H1 (cell line): ENCODE measurements at regions of chr1 and their contacts with region 1.

Region 1: DNA sequence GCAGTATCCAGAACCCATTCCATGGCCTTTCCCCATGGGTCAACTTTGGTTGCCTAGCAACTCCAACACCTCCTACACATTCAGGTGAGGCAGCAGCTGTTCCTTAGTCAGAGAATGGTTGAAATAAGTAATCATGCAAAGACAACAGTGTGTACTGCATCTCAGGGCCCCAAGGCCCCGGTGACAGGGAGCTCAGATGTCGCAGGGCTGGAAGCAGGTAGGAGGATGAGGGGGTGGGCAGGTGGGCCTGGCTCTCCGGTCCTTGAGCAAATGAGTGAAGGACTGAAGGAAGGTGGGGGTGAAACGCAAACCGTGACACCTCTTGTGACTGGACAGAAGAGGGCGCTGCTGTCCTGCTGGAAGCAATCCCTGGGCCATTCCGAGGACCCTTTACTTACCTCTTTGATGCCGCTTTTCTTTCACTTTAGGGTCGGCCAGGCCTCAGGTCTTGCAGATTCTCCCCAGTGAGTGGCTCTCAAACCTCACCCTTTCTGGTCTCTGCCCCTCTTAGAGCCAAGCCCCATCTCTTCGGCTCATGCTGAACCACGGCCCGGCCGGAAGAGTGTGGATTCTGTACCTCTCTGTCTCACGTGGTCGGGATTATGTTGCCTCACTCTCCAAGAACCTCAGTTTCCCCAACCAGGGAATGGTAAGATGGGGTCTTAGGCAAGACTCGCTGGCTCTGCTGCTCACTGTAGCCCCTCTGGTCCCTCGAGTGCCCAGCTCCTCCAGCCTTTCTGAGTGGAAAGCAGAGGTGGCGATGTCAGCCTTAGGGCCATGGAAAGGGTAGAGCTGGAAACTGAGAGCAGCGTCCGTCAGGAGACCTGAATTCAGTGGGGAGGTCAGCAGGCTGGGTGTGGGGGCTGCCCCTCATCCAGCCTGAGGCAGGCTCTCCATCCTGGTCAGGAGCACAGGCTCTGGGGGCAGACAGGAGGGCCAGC is 5.6 kb upstream of the KCNA10 start:
- DNase-seq: peak; percentile 53 to 81
- H3K4me3 ChIP-seq: no peak overlapping the region
- H3K27ac ChIP-seq: no peak overlapping the region
- H3K4me1 ChIP-seq: peaks cover 0 to 3% (median 0%) of the 10 kb centered on the region in 4 experiments; a peak in 1 of 7 replicates
- H3K27me3 ChIP-seq: peaks cover 0 to 6% (median 0%) of the 10 kb centered on the region in 4 experiments; a peak in 4 of 7 replicates
- CTCF ChIP-seq: peak; percentile 89 to 97 (median 93)
- EP300 ChIP-seq: no peak
- POLR2A ChIP-seq: no peak
- RAD21 ChIP-seq: peak; percentile 95 to 98

Region 2: DNA sequence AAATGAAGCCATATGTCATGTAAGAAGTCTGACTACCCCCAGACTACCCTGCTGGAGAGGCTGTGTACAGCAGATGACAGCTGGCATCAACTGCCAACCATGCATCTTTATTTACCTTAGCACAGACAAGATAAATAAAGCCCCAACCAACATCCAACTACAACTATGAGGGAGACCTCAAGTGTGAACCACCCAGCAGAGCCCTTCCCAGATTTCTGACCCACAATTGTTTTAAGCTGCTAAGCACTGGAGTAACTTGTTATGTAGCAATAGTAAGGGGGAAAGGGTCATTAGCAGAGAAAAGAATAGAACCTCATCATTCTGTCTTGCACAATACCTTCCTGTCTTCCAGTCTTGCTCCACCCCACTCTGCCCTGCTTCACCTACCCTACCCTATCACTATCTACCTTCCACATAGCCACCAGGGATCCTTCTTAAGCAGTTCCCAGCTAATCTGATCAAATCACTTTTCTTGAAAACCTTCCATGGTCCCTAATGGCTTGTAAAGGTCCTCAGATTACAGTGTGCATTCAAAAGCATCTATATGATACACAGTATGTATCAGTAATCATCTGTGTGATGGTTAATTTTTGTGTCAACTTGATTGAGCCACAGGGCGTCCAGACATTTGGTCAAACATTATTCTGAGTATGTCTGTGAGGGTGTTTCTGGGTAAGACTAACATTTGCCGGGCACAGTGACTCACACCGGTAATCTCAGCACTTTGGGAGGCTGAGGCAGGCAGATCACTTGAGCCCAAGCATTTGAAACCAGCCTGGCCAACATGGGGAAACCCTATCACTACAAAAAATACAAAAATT is 205.0 kb before region 1 on chr1:
- CTCF ChIA-PET with region 1: no interaction called
- POLR2A ChIA-PET with region 1: no interaction called
- DNase-seq: no peak
- H3K4me3 ChIP-seq: no peak overlapping the region
- H3K27ac ChIP-seq: no peak overlapping the region
- H3K4me1 ChIP-seq: no peaks in the 10 kb centered on the region
- H3K27me3 ChIP-seq: no peaks in the 10 kb centered on the region
- CTCF ChIP-seq: no peak
- EP300 ChIP-seq: no peak
- POLR2A ChIP-seq: no peak
- RAD21 ChIP-seq: no peak

Region 3: GRCh38 chr1:110508038-110508940 is 16.3 kb before region 1 on chr1:
- CTCF ChIA-PET with region 1: interaction called, 85 read pairs
- POLR2A ChIA-PET with region 1: interaction called, 3 read pairs
- DNase-seq: peak in 1 of 2 experiments; percentile 58
- H3K4me3 ChIP-seq: no peak overlapping the region
- H3K27ac ChIP-seq: no peak overlapping the region
- H3K4me1 ChIP-seq: peaks cover 0 to 7% (median 2%) of the 10 kb centered on the region in 4 experiments; a peak in 3 of 7 replicates
- H3K27me3 ChIP-seq: no peaks in the 10 kb centered on the region; a peak in 1 of 7 replicates
- CTCF ChIP-seq: no peak
- EP300 ChIP-seq: no peak
- POLR2A ChIP-seq: no peak
- RAD21 ChIP-seq: no peak

Region 4: GRCh38 chr1:110554871-110555801 is 30.6 kb after region 1 on chr1:
- CTCF ChIA-PET with region 1: interaction called, 302 read pairs
- POLR2A ChIA-PET with region 1: no interaction called
- DNase-seq: peak in 1 of 2 experiments; percentile 81
- H3K4me3 ChIP-seq: peak overlapping the region; percentile 37 to 57 (median 44)
- H3K27ac ChIP-seq: no peak overlapping the region
- H3K4me1 ChIP-seq: peaks cover 0 to 8% (median under 1%) of the 10 kb centered on the region in 4 experiments; a peak in 3 of 7 replicates
- H3K27me3 ChIP-seq: peaks cover 3 to 32% (median 24%) of the 10 kb centered on the region in 4 experiments
- CTCF ChIP-seq: peak; percentile 73 to 81 (median 76)
- EP300 ChIP-seq: no peak
- POLR2A ChIP-seq: no peak
- RAD21 ChIP-seq: peak; percentile 32 to 52

Region 5: DNA sequence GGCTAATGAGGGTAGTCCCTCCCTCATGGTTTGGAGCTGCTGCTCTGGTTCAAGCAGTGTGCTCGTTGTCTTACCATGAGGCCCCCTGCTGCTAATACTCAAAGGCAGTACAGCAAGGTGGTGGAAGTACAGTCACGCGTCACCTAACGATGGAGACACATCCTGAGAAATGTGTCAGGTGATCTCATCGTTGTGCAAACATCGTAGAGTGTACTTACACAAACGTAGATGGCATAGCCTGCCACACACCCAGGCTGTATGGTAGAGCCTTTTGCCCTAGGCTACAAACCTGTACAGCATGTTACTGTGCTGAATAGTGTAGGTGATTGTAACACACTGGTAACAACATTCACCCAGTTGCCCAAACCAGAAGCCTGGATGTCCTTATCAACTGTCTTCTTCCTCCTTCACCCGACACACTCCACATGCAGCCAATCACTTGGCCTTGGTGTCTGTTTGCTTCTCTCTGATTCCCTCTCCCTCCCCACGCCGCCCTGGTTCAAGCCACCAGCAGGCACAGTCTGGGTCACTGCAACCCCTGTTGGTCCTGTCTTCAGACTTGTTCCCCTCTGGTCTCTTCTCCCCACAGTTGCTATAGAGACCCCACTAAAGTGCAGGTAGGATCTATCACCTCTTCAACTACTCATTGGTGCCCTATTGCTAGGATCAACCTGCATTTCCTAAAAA is 87.6 kb after region 1 on chr1:
- CTCF ChIA-PET with region 1: interaction called, 189 read pairs
- POLR2A ChIA-PET with region 1: no interaction called
- DNase-seq: no peak
- H3K4me3 ChIP-seq: no peak overlapping the region
- H3K27ac ChIP-seq: no peak overlapping the region
- H3K4me1 ChIP-seq: peaks cover 0 to 7% (median 2%) of the 10 kb centered on the region in 4 experiments; a peak in 4 of 7 replicates
- H3K27me3 ChIP-seq: peaks cover 25 to 42% (median 37%) of the 10 kb centered on the region in 4 experiments
- CTCF ChIP-seq: no peak
- EP300 ChIP-seq: no peak
- POLR2A ChIP-seq: no peak
- RAD21 ChIP-seq: no peak

Region 6: GRCh38 chr1:110766025-110766647 is 241.6 kb after region 1 on chr1:
- CTCF ChIA-PET with region 1: interaction called, 20 read pairs
- POLR2A ChIA-PET with region 1: no interaction called
- DNase-seq: no peak
- H3K4me3 ChIP-seq: no peak overlapping the region
- H3K27ac ChIP-seq: no peak overlapping the region
- H3K4me1 ChIP-seq: no peaks in the 10 kb centered on the region
- H3K27me3 ChIP-seq: no peaks in the 10 kb centered on the region
- CTCF ChIP-seq: peak in 2 of 3 experiments; percentile 73 to 87; a peak in 3 of 4 replicates
- EP300 ChIP-seq: no peak
- POLR2A ChIP-seq: no peak
- RAD21 ChIP-seq: peak; percentile 84 to 89